H1 (cell line): ENCODE measurements at regions of chr13 and their contacts with region 1.

Region 1: DNA sequence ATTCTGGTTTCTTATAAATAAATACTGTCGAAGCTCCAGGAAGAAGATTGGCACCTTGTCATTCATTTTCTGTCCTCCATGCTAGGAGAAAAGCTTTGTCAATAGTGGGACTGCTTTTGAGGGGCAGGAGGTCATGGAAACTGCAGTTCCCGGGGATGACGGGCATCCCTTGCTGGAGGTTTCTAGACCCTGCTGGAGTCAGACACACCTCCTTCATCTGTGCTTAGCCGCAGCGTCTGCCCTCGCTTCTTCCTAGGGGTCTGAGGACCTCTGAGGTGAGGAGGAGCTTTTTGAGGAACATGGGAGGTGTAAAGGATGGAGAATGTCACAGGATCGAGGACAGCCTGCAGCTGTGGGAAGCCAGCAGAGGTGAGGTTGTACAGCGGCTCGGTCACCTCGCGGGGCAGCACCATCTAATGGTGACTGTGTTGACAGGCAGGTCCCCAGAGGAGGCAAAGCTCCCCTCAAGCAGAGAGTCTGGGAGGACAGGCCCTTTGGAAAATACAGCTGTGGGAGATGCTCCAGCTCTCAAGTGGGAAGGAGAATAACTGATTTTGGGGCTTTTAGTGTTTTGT is 172.7 kb upstream of the RNF113B start:
- DNase-seq: peak in 1 of 2 experiments; percentile 70
- H3K4me3 ChIP-seq: no peak overlapping the region
- H3K27ac ChIP-seq: no peak overlapping the region
- H3K4me1 ChIP-seq: no peaks in the 10 kb centered on the region; a peak in 1 of 7 replicates
- H3K27me3 ChIP-seq: no peaks in the 10 kb centered on the region
- CTCF ChIP-seq: peak; percentile 52 to 72 (median 67)
- EP300 ChIP-seq: no peak
- POLR2A ChIP-seq: no peak
- RAD21 ChIP-seq: peak; percentile 71 to 79

Region 2: GRCh38 chr13:98301721-98302120 is 48.1 kb before region 1 on chr13:
- CTCF ChIA-PET with region 1: interaction called, 12 read pairs
- POLR2A ChIA-PET with region 1: no interaction called
- DNase-seq: no peak
- H3K4me3 ChIP-seq: no peak overlapping the region
- H3K27ac ChIP-seq: no peak overlapping the region
- H3K4me1 ChIP-seq: peaks cover 0 to 4% (median 1%) of the 10 kb centered on the region in 4 experiments; a peak in 4 of 7 replicates
- H3K27me3 ChIP-seq: no peaks in the 10 kb centered on the region; a peak in 1 of 7 replicates
- CTCF ChIP-seq: no peak
- EP300 ChIP-seq: no peak
- POLR2A ChIP-seq: no peak
- RAD21 ChIP-seq: no peak

Region 3: GRCh38 chr13:98315466-98315865 is 34.4 kb before region 1 on chr13:
- CTCF ChIA-PET with region 1: interaction called, 14 read pairs
- POLR2A ChIA-PET with region 1: no interaction called
- DNase-seq: no peak
- H3K4me3 ChIP-seq: no peak overlapping the region
- H3K27ac ChIP-seq: no peak overlapping the region
- H3K4me1 ChIP-seq: peaks cover 0 to 16% (median 13%) of the 10 kb centered on the region in 4 experiments; a peak in 5 of 7 replicates
- H3K27me3 ChIP-seq: no peaks in the 10 kb centered on the region
- CTCF ChIP-seq: no peak
- EP300 ChIP-seq: no peak
- POLR2A ChIP-seq: no peak
- RAD21 ChIP-seq: no peak

Region 4: GRCh38 chr13:98333486-98333885 is 16.3 kb before region 1 on chr13:
- CTCF ChIA-PET with region 1: interaction called, 13 read pairs
- POLR2A ChIA-PET with region 1: interaction called, 8 read pairs
- DNase-seq: no peak
- H3K4me3 ChIP-seq: no peak overlapping the region
- H3K27ac ChIP-seq: peak overlapping the region; percentile 43; the same call in 1 of the 2 replicates
- H3K4me1 ChIP-seq: peaks cover 4 to 27% (median 20%) of the 10 kb centered on the region in 4 experiments
- H3K27me3 ChIP-seq: no peaks in the 10 kb centered on the region
- CTCF ChIP-seq: no peak
- EP300 ChIP-seq: no peak
- POLR2A ChIP-seq: no peak
- RAD21 ChIP-seq: no peak

Region 5: GRCh38 chr13:98390086-98390715 is 40.4 kb after region 1 on chr13:
- CTCF ChIA-PET with region 1: no interaction called
- POLR2A ChIA-PET with region 1: no interaction called
- DNase-seq: no peak
- H3K4me3 ChIP-seq: no peak overlapping the region
- H3K27ac ChIP-seq: no peak overlapping the region
- H3K4me1 ChIP-seq: no peaks in the 10 kb centered on the region
- H3K27me3 ChIP-seq: no peaks in the 10 kb centered on the region
- CTCF ChIP-seq: no peak; a peak in 1 of 4 replicates
- EP300 ChIP-seq: no peak
- POLR2A ChIP-seq: no peak
- RAD21 ChIP-seq: peak in 1 of 2 experiments; percentile 3; a peak in 1 of 4 replicates